ENCODE measurements at regions of chr4 and their contacts with region 1.

Region 1: GRCh38 chr4:183098723-183099536 is at the start of gene WWC2:
- DNase-seq: peak; percentile 27
- ATAC-seq: peak; percentile 71
- H3K4me3 Mint-ChIP-seq: peak within 1 kb of the TSS; percentile 72
- H3K27ac Mint-ChIP-seq: no peak within 1 kb of the TSS
- H3K4me1 Mint-ChIP-seq: peaks cover 7% of the 10 kb centered on the region
- H3K27me3 Mint-ChIP-seq: peaks cover 35% of the 10 kb centered on the region
- CTCF ChIP-seq: no peak
- total RNA-seq, gene WWC2: 0.47 and 0.76 TPM in 2 replicates

Region 2: DNA sequence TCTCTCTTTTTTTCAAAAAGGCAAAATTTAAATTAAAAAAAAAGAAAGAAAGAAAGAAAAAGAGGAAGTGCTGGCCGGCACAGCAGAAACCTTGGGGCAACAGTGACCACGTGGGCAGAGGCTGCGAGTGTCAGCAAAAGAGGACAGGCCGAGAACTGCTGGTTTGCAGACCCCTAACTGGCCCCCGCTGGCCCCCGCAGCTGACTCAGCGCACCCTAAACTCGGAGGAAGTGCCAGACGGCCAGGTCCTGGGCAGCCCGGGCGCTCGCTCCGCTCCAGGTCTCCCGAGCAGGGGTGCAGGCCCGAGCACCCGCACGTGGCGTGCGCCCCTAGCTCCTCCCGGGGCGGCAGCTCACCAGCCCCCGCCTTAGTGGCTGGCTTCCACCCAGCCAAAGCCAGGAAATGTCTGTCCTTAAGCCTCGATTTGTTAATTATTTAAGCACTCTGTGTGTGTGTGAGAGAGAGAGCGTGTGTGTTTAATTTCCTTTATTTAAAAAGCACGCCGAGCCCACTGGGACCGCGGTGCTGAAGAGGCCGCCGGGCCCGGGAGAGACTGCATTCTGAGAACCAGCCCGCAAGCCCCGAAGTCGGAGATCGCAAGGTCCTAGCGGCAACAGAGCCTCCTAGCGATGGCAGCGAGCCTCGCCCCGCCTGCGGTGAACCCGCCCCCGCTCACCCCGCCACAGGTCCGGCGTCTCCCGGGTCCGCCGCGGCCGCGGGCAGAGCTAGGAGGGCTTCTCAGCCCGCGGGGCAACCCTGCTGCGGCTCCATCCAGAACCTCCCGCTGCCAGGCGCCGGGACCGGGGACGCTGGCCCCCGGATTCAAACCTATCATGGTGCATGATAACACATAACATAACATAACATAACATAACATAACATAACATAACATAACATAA is 299.5 kb after region 1 on chr4:
- CTCF ChIA-PET with region 1: no interaction called
- POLR2A ChIA-PET with region 1: no interaction called
- intact Hi-C with region 1: loop called (anchors 10 kb)
- DNase-seq: peak; percentile 57
- ATAC-seq: peak; percentile 89
- H3K4me3 Mint-ChIP-seq: peak overlapping the region; percentile 82
- H3K27ac Mint-ChIP-seq: peak overlapping the region; percentile 82
- H3K4me1 Mint-ChIP-seq: peaks cover 25% of the 10 kb centered on the region
- H3K27me3 Mint-ChIP-seq: peaks cover 7% of the 10 kb centered on the region
- CTCF ChIP-seq: no peak